GM12878 (cell line): ENCODE measurements at regions of chr1 and their contacts with region 1.

Region 1: GRCh38 chr1:62070384-62071011 is 124.2 kb upstream of the L1TD1 start:
- DNase-seq: no peak
- ATAC-seq: peak; percentile 34; the same call in 1 of the 3 replicates
- H3K4me3 ChIP-seq: no peak overlapping the region
- H3K27ac ChIP-seq: no peak overlapping the region
- H3K4me1 ChIP-seq: no peaks in the 10 kb centered on the region
- H3K27me3 ChIP-seq: no peaks in the 10 kb centered on the region
- CTCF ChIP-seq: peak in 2 of 3 experiments; percentile 34 to 49; a peak in 4 of 6 replicates
- EP300 ChIP-seq: no peak
- POLR2A ChIP-seq: no peak
- RAD21 ChIP-seq: peak; percentile 56

Region 2: DNA sequence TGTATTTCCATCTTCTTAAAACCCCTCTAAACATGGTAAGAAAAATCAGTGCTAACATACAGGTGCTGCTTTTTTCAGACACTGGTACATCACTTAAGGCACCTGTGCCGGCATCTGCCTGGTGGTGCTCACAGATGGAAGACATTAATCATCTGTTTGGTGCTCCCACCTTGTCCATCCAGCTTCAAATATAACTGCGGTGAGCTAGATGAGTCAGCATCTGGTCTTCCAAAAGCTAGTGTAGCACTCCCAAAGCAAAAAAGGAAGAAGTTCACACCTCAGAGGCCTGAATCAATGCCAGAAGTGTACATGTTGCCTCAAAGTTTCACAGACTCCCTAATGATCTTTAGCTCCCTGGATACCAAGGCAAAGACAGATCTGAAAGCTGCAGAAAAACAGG is 390.0 kb before region 1 on chr1:
- CTCF ChIA-PET with region 1: no interaction called
- POLR2A ChIA-PET with region 1: no interaction called
- RAD21 ChIA-PET with region 1: no interaction called
- SMC1A ChIA-PET with region 1: no interaction called
- in situ Hi-C with region 1: no loop called
- intact Hi-C with region 1: no loop called
- DNase-seq: no peak
- ATAC-seq: no peak
- H3K4me3 ChIP-seq: no peak overlapping the region
- H3K27ac ChIP-seq: no peak overlapping the region
- H3K4me1 ChIP-seq: no peaks in the 10 kb centered on the region
- H3K27me3 ChIP-seq: no peaks in the 10 kb centered on the region
- CTCF ChIP-seq: no peak
- EP300 ChIP-seq: no peak
- POLR2A ChIP-seq: no peak
- RAD21 ChIP-seq: no peak

Region 3: GRCh38 chr1:61950418-61950817 is 120.1 kb before region 1 on chr1:
- CTCF ChIA-PET with region 1: no interaction called
- POLR2A ChIA-PET with region 1: no interaction called
- RAD21 ChIA-PET with region 1: no interaction called
- SMC1A ChIA-PET with region 1: no interaction called
- in situ Hi-C with region 1: no loop called
- intact Hi-C with region 1: loop called (anchors 5 kb)
- DNase-seq: no peak
- ATAC-seq: no peak
- H3K4me3 ChIP-seq: no peak overlapping the region
- H3K27ac ChIP-seq: no peak overlapping the region
- H3K4me1 ChIP-seq: no peaks in the 10 kb centered on the region
- H3K27me3 ChIP-seq: no peaks in the 10 kb centered on the region
- CTCF ChIP-seq: peak in 1 of 3 experiments; percentile 15; a peak in 1 of 6 replicates
- EP300 ChIP-seq: no peak
- POLR2A ChIP-seq: no peak
- RAD21 ChIP-seq: peak; percentile 42; the same call in 1 of the 2 replicates